ENCODE measurements at regions of chr17 and their contacts with region 1.

Region 1: GRCh38 chr17:75131280-75132017 is at the start of gene NT5C:
- DNase-seq: peak; percentile 84
- ATAC-seq: peak; percentile 82
- H3K4me3 Mint-ChIP-seq: peak within 1 kb of the TSS; percentile 83
- H3K27ac Mint-ChIP-seq: peak within 1 kb of the TSS; percentile 90
- H3K4me1 Mint-ChIP-seq: peaks cover 11% of the 10 kb centered on the region
- H3K27me3 Mint-ChIP-seq: no peaks in the 10 kb centered on the region
- total RNA-seq, gene NT5C: 51.7 to 61.5 TPM

Region 2: DNA sequence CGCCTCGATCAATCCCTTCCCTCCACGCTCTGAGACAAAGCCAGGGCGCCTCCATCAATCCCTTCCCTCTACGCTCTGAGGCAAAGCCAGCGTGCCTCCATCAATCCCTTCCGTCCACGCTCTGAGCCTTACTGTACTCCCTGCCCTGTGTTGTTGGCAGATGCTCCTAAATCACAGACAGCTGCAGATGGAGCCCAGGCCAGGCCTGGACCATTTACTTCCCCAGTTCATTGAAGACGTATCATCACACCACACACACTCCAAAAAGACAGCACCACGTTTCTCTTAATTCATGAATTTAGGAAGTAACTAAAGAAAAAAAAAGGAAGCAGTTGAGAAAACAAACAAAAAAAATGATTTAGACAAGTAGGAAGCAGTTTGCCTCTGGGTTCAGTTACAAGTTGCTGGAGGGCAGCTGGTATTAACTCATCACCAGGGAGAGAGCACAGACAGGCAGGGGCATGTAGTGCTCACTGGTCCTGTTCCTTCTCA is 532.0 kb before region 1 on chr17:
- CTCF ChIA-PET with region 1: no interaction called
- POLR2A ChIA-PET with region 1: no interaction called
- intact Hi-C with region 1: no loop called
- DNase-seq: no peak
- ATAC-seq: no peak
- H3K4me3 Mint-ChIP-seq: no peak overlapping the region
- H3K27ac Mint-ChIP-seq: no peak overlapping the region
- H3K4me1 Mint-ChIP-seq: peaks cover 35% of the 10 kb centered on the region
- H3K27me3 Mint-ChIP-seq: peaks cover 2% of the 10 kb centered on the region

Region 3: DNA sequence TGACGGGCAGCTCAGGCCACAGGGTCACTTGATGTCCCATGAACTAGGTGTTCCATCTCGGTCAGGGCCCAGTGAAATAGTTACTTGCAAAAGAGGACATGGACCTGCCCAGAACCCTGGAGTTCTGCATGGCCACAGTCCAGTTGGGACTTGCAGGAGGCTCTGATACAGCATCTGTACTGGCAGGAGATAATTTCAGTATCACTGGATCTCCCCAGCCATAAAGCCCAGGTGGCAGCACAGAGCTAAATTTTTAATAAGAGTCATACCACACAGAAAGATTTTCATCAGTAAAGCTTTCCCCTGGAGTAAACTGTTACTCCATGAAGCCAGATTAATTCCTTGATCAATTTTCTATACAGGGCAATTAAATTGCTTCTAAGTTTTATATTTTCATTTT is 61.7 kb before region 1 on chr17:
- CTCF ChIA-PET with region 1: no interaction called
- POLR2A ChIA-PET with region 1: no interaction called
- intact Hi-C with region 1: loop called in 1 of 2 experiments (anchors 5 kb)
- DNase-seq: peak; percentile 31
- ATAC-seq: no peak
- H3K4me3 Mint-ChIP-seq: no peak overlapping the region
- H3K27ac Mint-ChIP-seq: no peak overlapping the region
- H3K4me1 Mint-ChIP-seq: peaks cover 34% of the 10 kb centered on the region
- H3K27me3 Mint-ChIP-seq: no peaks in the 10 kb centered on the region